ENCODE measurements at regions of chr10 and their contacts with region 1.

Region 1: GRCh38 chr10:79542626-79543025 is 17.6 kb downstream of the SFTPA2 start:
- DNase-seq: no peak
- ATAC-seq: no peak
- H3K4me3 ChIP-seq: no peak overlapping the region
- H3K27ac ChIP-seq: no peak overlapping the region
- H3K4me1 ChIP-seq: no peaks in the 10 kb centered on the region
- H3K27me3 ChIP-seq: peaks cover 12% of the 10 kb centered on the region
- CTCF ChIP-seq: no peak
- POLR2A ChIP-seq: no peak
- RAD21 ChIP-seq: no peak

Region 2: GRCh38 chr10:79374312-79375191 is 168.1 kb before region 1 on chr10:
- CTCF ChIA-PET with region 1: no interaction called
- POLR2A ChIA-PET with region 1: no interaction called
- dilution Hi-C with region 1: no loop called
- in situ Hi-C with region 1: no loop called
- intact Hi-C with region 1: loop called (anchors 10 kb)
- DNase-seq: peak; percentile 67
- ATAC-seq: peak; percentile 79
- H3K4me3 ChIP-seq: no peak overlapping the region
- H3K27ac ChIP-seq: 0 out of 2 replicates have a peak overlapping the region, but pooled peaks have one; percentile 19
- H3K4me1 ChIP-seq: peaks cover 12% of the 10 kb centered on the region
- H3K27me3 ChIP-seq: no peaks in the 10 kb centered on the region
- CTCF ChIP-seq: peak; percentile 92
- POLR2A ChIP-seq: peak; percentile 53; the same call in 1 of the 2 replicates
- RAD21 ChIP-seq: peak; percentile 99

Region 3: DNA sequence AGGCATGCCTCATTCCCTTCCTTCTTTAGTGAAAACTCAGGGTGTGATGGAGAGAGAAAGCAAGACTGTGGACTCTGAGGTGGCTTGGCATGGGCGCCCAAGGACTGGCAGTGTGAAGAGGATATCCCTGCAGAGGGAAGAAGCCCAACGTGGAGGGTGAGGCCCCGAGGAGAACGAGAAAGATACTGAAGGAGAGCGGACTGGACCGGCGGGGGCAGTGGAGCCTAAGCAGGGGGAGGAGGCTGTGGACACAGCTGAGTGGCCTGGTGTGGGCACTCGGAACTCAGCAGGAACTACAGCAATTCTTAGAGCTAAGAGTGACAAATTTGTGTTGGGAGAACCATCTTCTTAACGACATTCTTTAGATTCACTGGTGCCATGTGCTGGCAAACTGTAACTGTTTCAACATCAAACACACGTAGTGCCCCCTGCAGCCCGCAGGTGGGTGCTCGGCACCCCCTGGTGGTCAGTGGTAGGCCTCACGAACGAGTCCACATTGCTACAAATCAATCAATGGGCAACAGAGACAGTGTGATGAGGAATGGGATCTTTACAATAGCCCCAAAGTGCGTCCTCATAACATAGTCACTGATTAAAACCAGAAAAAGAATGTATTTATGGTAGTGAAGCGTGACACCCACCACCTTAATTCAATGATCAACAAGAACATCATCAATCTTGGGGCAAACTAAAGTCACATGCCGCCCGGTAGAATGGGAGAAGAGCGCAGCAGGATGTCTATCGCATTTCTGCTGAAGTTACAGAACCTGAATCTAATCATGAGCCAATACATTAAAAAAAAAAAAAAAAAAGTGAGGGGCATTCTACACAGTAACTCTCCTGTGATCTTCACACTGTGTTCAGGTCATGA is 66.1 kb after region 1 on chr10:
- CTCF ChIA-PET with region 1: no interaction called
- POLR2A ChIA-PET with region 1: no interaction called
- dilution Hi-C with region 1: no loop called
- in situ Hi-C with region 1: no loop called
- intact Hi-C with region 1: loop called (anchors 2 kb)
- DNase-seq: peak; percentile 14
- ATAC-seq: peak; percentile 53
- H3K4me3 ChIP-seq: no peak overlapping the region
- H3K27ac ChIP-seq: no peak overlapping the region
- H3K4me1 ChIP-seq: no peaks in the 10 kb centered on the region
- H3K27me3 ChIP-seq: peaks cover 21% of the 10 kb centered on the region
- CTCF ChIP-seq: peak; percentile 65
- POLR2A ChIP-seq: no peak
- RAD21 ChIP-seq: peak; percentile 67

Region 4: GRCh38 chr10:79929409-79929904 is 386.8 kb after region 1 on chr10:
- CTCF ChIA-PET with region 1: no interaction called
- POLR2A ChIA-PET with region 1: no interaction called
- dilution Hi-C with region 1: no loop called
- in situ Hi-C with region 1: no loop called
- intact Hi-C with region 1: loop called (anchors 1 kb)
- DNase-seq: peak; percentile 58
- ATAC-seq: peak; percentile 91
- H3K4me3 ChIP-seq: no peak overlapping the region
- H3K27ac ChIP-seq: no peak overlapping the region
- H3K4me1 ChIP-seq: no peaks in the 10 kb centered on the region
- H3K27me3 ChIP-seq: peaks cover 19% of the 10 kb centered on the region
- CTCF ChIP-seq: peak; percentile 91
- POLR2A ChIP-seq: no peak
- RAD21 ChIP-seq: peak; percentile 96

Region 5: DNA sequence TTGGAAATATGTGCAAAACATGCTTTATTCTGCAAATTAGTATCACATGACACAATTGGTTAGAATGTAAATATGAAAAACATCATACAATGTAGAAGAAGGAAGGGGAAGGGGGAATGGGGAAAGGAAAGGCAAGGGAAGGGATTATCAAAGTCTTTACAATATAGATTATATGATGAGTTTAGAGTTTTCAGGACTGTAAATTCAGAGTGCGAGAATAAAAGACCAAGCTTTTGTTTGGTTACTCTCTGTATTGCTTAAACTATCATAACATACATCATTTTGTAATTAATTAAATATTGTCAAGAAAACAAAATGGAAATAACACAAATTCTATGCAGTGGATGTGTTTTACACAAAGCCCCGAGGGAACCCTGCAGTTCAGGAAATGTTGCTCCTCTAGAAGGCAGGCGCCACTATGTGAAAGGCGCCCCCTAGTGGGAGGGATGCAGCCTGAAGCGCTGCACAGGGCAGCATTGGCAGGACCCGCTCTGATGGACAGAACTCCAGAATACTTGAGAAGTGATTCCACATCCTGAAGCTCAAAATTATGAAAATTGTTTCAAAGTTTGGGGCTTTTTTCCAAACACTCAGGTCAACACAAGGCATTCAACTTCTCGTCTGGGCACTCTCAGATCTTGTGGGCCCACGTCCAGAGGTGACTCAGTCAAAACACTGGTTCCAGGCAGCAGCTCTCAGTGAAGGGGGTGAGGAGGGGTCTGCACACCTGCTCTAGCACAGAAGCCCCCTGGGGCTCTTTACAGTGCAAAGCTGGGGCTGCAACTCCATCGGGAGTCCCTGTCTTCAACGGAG is 504.2 kb after region 1 on chr10:
- CTCF ChIA-PET with region 1: no interaction called
- POLR2A ChIA-PET with region 1: no interaction called
- dilution Hi-C with region 1: no loop called
- in situ Hi-C with region 1: no loop called
- intact Hi-C with region 1: loop called (anchors 1 kb)
- DNase-seq: peak; percentile 50
- ATAC-seq: peak; percentile 98
- H3K4me3 ChIP-seq: no peak overlapping the region
- H3K27ac ChIP-seq: no peak overlapping the region
- H3K4me1 ChIP-seq: no peaks in the 10 kb centered on the region
- H3K27me3 ChIP-seq: peaks cover 6% of the 10 kb centered on the region; the same call in 1 of the 2 replicates
- CTCF ChIP-seq: peak; percentile 81
- POLR2A ChIP-seq: no peak
- RAD21 ChIP-seq: peak; percentile 67

Region 6: DNA sequence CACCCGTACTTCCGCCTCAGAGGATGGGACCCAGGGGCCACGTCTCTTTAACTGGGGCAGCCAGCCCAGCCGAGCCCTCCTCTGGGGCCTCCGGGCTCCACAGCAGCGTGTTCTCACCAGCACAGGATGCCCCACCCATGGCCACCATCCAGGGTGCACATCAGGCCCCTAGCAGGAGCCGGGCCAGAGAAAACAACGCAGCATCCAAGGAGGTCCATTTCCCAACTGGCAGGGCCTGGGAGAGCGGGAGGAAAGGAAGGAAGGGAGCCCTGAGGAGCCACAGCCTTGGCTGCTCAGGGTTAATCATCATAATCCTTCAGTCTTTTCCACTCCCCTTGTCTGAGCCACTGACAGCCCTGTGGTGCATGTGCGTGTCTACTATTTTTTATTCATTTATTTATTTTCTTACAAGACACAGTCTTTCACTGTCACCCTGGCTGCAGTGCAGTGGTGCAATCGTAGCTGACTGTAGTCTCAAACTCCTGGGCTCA is 593.5 kb after region 1 on chr10:
- CTCF ChIA-PET with region 1: no interaction called
- POLR2A ChIA-PET with region 1: no interaction called
- dilution Hi-C with region 1: no loop called
- in situ Hi-C with region 1: no loop called
- intact Hi-C with region 1: loop called (anchors 10 kb)
- DNase-seq: peak; percentile 88
- ATAC-seq: peak; percentile 61
- H3K4me3 ChIP-seq: no peak overlapping the region
- H3K27ac ChIP-seq: peak overlapping the region; percentile 74; the same call in 1 of the 2 replicates
- H3K4me1 ChIP-seq: peaks cover 21% of the 10 kb centered on the region
- H3K27me3 ChIP-seq: no peaks in the 10 kb centered on the region
- CTCF ChIP-seq: no peak
- POLR2A ChIP-seq: no peak
- RAD21 ChIP-seq: no peak